Activated B cell treated with CpG ODN at 0.5 μM for 24 hours (primary cell): ENCODE measurements at regions of chr17 and their contacts with region 1.

Region 1: DNA sequence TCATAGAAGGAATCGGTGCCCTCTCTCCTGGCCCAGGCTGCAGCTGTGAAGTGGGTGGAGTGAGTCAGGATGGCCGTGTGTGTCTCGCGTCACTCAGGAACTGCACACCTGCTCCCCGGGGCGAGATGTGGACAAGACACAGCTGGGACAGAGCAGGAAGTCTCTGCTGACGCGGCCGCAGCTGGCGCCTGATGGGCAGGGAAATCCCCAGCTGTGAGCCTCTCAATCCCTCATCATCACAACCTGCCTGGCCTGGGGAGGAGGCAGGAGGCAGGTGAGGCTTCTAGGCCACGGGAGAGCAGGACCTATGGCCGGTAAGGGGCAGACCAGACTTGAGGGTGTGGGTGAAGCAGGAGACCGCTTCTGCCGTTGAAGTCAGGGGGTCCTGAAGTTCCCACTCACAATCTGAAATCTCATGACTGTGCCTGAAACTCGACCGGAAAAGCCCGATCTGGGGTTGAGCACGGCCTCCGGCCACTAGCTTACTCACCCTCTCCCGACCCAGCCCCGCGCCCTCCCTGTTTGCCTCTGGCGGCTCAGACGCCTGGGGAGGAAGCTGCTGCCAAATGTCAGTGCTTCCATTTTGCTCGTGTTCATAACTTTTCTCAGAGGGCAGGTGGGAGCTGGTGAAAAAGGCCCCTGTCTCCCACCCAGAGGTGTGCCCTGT is 1.1 kb upstream of the TRPV3 start:
- DNase-seq: peak; percentile 64
- ATAC-seq: peak; percentile 73
- H3K4me3 Mint-ChIP-seq: peak overlapping the region; percentile 61
- H3K27ac Mint-ChIP-seq: peak overlapping the region; percentile 88
- H3K4me1 Mint-ChIP-seq: peaks cover 49% of the 10 kb centered on the region
- H3K27me3 Mint-ChIP-seq: peaks cover 6% of the 10 kb centered on the region
- CTCF ChIP-seq: no peak

Region 2: DNA sequence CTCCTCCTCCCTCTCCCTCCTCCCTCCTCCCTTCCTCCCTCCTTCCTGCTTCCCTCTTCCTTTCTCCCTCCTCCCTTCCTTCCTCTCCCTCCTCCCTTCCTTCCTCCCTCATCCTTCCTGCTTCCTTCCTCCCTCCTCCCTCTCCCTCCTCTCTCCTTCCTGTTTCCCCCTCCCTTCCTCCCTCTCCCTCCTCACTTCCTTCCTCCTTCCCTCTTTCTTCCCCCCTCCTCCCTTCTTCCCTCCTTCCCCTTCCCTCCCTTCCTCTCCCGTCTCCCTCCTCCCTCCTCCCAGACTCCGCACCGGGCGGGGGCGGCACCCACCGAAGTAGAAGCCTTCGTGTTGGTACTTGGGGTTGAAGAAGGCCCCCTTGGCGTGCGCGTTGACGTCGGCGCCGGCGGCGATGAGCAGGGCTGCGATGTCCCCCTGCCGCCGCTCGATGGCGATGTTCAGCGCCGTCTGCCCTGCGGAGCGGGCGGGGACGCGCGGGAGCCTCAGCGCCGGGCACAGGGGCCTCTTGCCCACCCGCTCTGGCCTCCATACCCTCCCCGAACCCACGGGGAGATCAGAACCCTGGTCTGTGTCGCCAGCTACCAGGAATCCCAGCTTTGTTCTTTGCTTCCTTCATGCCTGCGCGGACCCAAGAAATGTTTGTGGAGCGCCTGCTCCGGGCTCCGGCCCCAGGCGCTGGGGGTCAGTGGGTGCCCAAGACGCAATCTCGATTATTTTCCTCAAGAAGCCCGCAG is 23.3 kb before region 1 on chr17:
- CTCF ChIA-PET with region 1: interaction called, 6 read pairs
- POLR2A ChIA-PET with region 1: interaction called, 4 read pairs
- intact Hi-C with region 1: loop called (anchors 2 kb)
- DNase-seq: peak; percentile 53
- ATAC-seq: peak; percentile 97
- H3K4me3 Mint-ChIP-seq: peak overlapping the region; percentile 67
- H3K27ac Mint-ChIP-seq: no peak overlapping the region
- H3K4me1 Mint-ChIP-seq: peaks cover 13% of the 10 kb centered on the region
- H3K27me3 Mint-ChIP-seq: no peaks in the 10 kb centered on the region
- CTCF ChIP-seq: no peak

Region 3: GRCh38 chr17:3545151-3545550 is 13.6 kb before region 1 on chr17:
- CTCF ChIA-PET with region 1: no interaction called
- POLR2A ChIA-PET with region 1: interaction called, 10 read pairs
- intact Hi-C with region 1: no loop called
- DNase-seq: no peak
- ATAC-seq: no peak
- H3K4me3 Mint-ChIP-seq: no peak overlapping the region
- H3K27ac Mint-ChIP-seq: no peak overlapping the region
- H3K4me1 Mint-ChIP-seq: no peaks in the 10 kb centered on the region
- H3K27me3 Mint-ChIP-seq: no peaks in the 10 kb centered on the region
- CTCF ChIP-seq: no peak

Region 4: GRCh38 chr17:3582915-3583314 is 24.2 kb after region 1 on chr17:
- CTCF ChIA-PET with region 1: no interaction called
- POLR2A ChIA-PET with region 1: no interaction called
- intact Hi-C with region 1: no loop called
- DNase-seq: no peak
- ATAC-seq: no peak
- H3K4me3 Mint-ChIP-seq: no peak overlapping the region
- H3K27ac Mint-ChIP-seq: no peak overlapping the region
- H3K4me1 Mint-ChIP-seq: no peaks in the 10 kb centered on the region
- H3K27me3 Mint-ChIP-seq: no peaks in the 10 kb centered on the region
- CTCF ChIP-seq: no peak

Region 5: DNA sequence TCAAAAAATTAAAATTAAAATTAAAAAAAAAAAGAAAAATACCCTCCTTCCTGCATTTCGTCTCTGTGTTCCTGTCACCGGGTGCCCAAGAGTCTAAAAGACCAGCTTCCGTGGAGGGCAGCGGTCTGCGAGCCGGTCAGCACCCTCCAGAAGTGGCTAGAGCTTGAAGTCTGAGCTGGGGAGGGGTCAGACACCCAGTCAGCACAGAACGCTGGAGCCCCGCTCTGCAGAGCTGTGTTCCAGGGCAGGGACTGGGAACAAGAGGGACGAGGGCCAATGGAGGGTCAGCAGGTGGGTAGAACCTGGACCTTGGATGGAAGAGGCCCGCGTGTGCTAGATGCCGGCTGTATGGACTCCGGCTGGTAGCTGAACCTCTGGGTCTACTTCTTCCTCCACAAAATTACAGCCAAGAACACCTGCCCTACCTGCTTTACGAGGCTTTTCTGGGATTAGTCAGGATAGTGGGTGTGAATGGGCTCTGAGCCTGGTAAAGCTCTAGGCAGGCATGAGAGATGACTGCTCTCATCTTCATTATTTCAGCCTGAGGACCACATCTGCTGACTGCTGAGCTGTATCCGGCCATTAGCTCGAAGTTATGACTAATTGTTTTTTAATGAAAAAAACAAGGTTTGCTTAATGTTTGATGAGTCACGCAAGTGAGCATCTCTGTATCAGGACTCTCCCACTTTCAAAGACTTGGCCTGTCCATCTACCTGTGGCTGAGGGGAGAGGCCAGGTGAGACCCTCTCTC is 44.6 kb after region 1 on chr17:
- CTCF ChIA-PET with region 1: no interaction called
- POLR2A ChIA-PET with region 1: no interaction called
- intact Hi-C with region 1: no loop called
- DNase-seq: no peak
- ATAC-seq: no peak
- H3K4me3 Mint-ChIP-seq: no peak overlapping the region
- H3K27ac Mint-ChIP-seq: no peak overlapping the region
- H3K4me1 Mint-ChIP-seq: peaks cover 4% of the 10 kb centered on the region
- H3K27me3 Mint-ChIP-seq: no peaks in the 10 kb centered on the region
- CTCF ChIP-seq: no peak